HEK293T (cell line): ENCODE measurements at regions of chr1 and their contacts with region 1.

Region 1: DNA sequence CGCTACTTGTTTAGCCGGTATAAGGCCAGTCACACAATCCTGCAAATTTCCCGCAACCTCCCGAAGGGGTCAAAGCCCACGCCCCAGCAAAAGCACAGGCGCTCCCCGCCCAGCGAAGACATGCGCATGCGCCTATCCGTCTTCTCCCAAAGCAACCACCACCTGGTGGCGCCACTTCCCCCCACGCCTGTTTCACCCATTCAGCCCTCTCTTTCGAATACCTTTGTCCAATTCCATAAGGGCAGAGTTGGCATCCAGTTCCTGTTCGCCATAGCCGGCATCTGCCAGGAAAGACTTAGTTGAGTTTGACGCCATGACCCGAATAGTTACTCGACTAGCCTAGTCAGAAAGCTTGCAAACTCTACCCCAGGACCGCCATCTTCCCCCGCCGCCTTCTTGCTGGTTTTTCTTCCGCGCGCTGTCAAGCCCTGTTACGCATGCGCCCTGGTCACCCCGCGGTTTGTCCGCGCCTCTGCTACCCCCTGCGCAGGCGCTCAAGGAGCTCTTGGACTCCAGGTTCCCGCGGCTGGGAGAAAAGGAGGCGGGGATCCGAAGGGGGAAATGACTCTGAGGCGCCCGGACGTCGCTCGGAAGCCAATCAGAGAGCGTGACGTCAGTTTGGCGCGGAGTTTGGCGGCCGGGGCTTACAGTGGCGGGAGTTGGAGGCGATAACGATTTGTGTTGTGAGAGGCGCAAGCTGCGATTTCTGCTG is at the starts of genes DTL and INTS7:
- DNase-seq: peak; percentile 99

Region 2: DNA sequence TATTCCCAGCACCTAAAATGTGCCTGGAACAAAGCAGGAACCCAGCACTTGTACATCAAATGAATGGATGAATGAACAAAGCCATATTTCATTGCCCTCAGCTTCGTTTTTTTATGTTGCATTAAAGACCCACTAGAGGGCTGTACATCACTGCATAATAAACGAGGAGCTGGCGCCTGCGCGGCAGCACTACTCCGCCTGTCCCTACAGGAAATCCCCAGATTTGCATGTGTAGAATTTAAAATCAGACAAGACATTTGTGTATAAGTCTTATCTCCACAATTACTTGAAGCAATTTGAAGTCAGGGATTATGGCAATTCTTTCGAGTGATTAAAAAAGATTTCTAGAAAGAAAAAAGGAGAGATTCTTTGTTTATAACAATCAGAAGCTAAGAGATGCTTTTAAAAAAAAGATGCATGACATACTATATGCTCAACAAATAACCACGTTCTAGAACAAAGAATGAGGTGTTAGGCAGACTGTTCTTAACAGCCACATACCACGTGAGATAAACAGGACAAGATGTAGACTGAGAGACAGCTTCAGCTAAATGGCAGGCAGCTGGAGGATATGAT is 354.4 kb before region 1 on chr1:
- CTCF ChIA-PET with region 1: interaction called, 13 read pairs
- POLR2A ChIA-PET with region 1: interaction called, 12 read pairs
- DNase-seq: peak; percentile 86

Region 3: DNA sequence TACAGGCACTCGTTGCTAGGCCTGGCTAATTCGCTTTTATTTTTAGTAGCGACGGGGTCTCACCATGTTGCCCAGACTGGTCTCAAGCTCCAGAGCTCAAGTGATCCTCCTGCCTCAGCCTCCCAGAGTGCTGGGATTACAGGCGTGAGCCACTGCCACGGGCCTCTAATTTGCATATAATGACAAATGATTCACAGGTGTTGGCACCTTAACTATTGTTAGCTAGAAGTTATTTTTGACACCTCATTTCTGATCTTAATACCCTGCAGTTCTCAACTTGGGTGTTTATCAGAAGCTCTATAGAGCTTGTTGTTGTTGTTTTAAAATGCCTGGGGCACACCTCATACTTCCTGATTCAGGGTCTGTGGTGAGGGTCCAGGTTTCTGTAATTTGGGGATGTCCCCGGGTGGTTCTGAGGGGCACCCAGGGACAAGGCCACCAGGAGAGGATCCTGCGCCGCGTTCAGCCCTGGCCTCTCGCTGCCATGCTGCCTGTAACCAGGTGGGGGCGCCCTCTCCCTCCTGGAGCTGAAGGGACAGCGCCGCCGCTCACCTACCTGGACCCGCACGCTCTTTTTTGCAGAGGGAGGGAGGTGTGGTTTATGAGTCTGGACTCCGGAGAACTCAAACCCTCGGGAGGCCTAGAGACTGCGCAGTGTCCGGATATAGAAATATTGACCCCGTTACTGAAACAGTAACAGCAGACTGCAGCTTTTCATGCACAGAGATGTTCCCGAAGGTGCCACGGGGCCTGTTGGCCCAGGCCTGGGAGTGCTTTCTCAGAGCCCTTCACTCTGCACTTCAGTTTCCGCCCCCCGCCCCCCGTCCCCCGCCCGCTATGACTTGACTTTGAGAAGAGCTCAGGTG is 336.9 kb before region 1 on chr1:
- CTCF ChIA-PET with region 1: interaction called, 8 read pairs
- POLR2A ChIA-PET with region 1: interaction called, 11 read pairs
- DNase-seq: peak; percentile 92

Region 4: DNA sequence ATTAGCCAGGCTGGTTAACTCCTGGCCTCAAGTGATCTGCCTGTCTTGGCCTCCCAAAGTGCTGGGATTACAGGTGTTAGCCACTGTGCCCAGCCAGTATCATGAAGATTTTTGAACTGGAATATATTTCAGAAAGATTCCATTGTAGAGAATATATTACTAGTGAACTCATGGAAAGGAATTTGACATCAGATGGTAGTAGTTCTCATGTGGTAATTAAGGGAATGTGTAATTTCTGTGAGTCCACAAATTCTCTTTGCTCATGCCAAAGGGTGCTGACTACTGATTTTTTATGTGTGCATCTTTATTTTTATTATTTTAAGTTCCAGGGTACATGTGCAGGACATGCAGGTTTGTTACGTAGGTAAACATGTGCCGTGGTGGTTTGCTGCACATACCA is 10.7 kb after region 1 on chr1:
- CTCF ChIA-PET with region 1: interaction called, 7 read pairs
- POLR2A ChIA-PET with region 1: interaction called, 19 read pairs
- DNase-seq: no peak

Region 5: DNA sequence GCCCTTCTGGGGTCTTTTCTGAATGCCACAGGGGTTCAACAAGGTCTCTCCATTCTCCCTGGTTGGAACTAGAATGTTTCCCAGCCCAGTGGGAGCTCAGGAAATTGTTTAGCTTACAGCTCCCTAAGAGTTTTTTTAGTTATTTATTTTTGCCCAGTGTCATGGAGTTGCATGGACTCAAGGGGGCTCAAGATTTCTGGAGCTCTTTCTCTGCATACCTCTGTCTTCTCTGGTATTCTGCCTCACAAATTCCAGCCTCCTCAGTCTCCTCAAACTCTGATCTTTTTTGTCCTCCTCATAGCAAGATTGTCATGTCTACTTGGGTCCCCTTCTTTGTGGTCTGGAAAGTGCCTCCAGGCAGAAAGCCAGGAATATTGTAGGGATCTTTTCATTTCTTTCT is 234.0 kb after region 1 on chr1:
- CTCF ChIA-PET with region 1: no interaction called
- POLR2A ChIA-PET with region 1: no interaction called
- DNase-seq: no peak

Region 6: DNA sequence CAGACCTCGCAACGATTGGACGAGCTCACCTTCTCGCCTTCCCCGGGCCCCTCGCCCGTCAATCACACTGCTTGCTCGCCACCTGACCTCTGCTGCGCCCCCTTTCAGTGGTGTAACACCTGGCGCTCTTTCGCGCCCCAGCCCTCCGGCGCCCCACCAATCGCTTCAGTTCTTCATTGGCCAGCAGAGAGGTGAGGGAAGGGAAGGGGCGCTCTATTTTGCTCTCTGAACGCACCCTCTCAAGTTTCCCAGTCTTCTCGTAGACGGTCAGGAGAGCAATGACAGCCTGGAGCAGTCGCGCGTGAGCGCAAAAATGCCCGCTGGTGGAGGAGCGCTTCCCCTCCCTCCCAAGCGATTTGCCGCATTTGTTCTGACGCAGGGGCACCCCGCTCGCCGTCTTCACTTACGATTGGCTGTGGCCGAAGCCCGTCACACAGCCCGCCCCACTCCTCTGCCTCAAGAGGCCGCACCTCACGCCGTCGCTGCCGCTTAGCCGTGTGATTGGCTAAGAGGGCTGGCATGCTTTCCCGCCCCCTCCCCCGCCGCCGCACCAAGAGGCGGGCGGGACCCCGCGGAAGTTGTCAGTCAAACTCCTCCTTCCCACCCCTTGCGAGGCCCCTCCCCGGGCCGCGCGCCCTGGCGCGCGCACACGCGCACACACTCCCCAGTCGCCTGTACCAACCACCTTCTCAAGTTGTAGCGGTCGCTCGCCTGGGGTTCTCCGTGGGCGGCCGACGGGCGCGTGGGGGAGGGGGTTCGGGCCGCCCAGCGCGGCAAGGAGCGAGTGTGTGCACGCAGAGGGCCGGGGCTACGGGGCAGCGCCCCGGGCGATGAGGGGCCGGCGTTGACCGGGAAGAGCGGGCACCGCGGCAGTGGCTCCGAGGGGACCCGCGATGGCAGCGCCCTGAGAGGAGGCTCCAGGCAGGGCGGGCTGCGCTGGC is 249.7 kb after region 1 on chr1 and contains the start of gene PPP2R5A:
- CTCF ChIA-PET with region 1: no interaction called
- POLR2A ChIA-PET with region 1: interaction called, 15 read pairs
- DNase-seq: peak; percentile 98